SK-N-SH (cell line): ENCODE measurements at regions of chr1 and their contacts with region 1.

Region 1: DNA sequence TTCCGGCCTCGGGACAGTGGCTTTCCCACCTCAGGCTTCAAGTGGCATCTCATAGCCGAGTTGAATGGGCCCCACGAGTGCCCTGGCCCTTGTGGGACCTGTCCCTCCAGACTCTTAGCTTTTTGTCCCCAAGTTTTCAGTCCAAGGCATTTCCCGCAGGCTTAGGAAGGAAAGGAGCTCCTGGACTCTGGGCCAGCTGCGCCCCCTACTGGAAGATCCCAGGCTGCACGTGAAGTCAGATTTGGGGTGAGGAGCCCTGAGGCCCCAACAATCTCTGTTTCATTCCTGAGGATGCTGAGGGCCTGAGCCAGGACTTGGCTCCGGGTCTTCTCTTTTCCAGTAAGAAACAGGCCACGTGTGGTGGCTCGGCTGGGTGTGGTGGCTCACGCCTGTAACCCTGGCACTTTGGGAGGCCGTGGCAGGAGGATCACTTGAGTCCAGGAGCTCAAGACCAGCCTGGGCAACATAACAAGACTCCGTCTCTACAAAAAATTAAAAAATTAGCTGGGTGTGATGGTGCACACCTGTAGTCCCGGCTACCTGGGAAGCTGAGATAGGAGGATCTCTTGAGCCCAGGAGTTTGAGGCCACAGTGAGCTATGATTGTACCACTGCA is 67.4 kb downstream of the ARHGEF10L start:
- DNase-seq: peak; percentile 88
- H3K4me3 ChIP-seq: no peak overlapping the region; a peak in 1 of 4 replicates
- H3K27ac ChIP-seq: no peak overlapping the region
- H3K4me1 ChIP-seq: peaks cover 0 to 41% of the 10 kb centered on the region in 2 experiments; a peak in 1 of 4 replicates
- H3K27me3 ChIP-seq: no peaks in the 10 kb centered on the region
- CTCF ChIP-seq: peak; percentile 98
- EP300 ChIP-seq: no peak
- RAD21 ChIP-seq: peak; percentile 96

Region 2: GRCh38 chr1:17274186-17275170 is 332.5 kb before region 1 on chr1:
- CTCF ChIA-PET with region 1: no interaction called
- POLR2A ChIA-PET with region 1: no interaction called
- DNase-seq: peak; percentile 76
- H3K4me3 ChIP-seq: no peak overlapping the region
- H3K27ac ChIP-seq: no peak overlapping the region
- H3K4me1 ChIP-seq: peaks cover 0 to 4% of the 10 kb centered on the region in 2 experiments; a peak in 1 of 4 replicates
- H3K27me3 ChIP-seq: no peaks in the 10 kb centered on the region
- CTCF ChIP-seq: peak; percentile 72
- EP300 ChIP-seq: no peak
- RAD21 ChIP-seq: peak; percentile 57

Region 3: GRCh38 chr1:17427696-17428660 is 179.0 kb before region 1 on chr1:
- CTCF ChIA-PET with region 1: no interaction called
- POLR2A ChIA-PET with region 1: no interaction called
- DNase-seq: no peak
- H3K4me3 ChIP-seq: no peak overlapping the region
- H3K27ac ChIP-seq: no peak overlapping the region; a peak in 1 of 4 replicates
- H3K4me1 ChIP-seq: peaks cover 0 to 11% of the 10 kb centered on the region in 2 experiments; a peak in 1 of 4 replicates
- H3K27me3 ChIP-seq: no peaks in the 10 kb centered on the region
- CTCF ChIP-seq: no peak
- EP300 ChIP-seq: no peak
- RAD21 ChIP-seq: no peak

Region 4: DNA sequence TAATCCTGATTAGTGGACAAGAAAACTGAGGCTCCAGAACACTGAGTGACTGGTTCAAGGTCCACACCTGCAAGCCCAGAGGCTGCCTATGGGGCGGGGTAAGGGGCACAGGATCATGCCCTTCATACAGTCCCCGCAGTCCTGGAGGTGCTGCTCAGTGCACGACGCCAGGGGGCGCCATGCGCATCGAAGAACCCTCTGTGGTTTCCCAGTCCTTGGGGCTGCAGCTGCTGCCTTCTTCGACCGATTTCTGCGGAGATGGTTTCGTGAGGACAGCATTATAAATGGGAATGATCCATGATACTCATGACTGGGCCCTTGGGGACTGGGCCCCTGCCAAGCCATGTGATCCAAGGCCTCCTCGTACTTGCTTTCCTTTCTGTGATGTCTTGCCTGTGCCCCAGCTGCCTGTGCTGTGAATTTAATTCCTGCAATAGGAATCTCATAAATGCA is 104.6 kb before region 1 on chr1:
- CTCF ChIA-PET with region 1: interaction called, 707 read pairs
- POLR2A ChIA-PET with region 1: interaction called, 12 read pairs
- DNase-seq: peak; percentile 85
- H3K4me3 ChIP-seq: no peak overlapping the region
- H3K27ac ChIP-seq: no peak overlapping the region
- H3K4me1 ChIP-seq: peaks cover 0 to 2% of the 10 kb centered on the region in 2 experiments; a peak in 1 of 4 replicates
- H3K27me3 ChIP-seq: peaks cover 8% of the 10 kb centered on the region
- CTCF ChIP-seq: peak; percentile 89
- EP300 ChIP-seq: no peak
- RAD21 ChIP-seq: peak; percentile 92

Region 5: GRCh38 chr1:17551755-17552234 is 55.1 kb before region 1 on chr1:
- CTCF ChIA-PET with region 1: interaction called, 13 read pairs
- POLR2A ChIA-PET with region 1: no interaction called
- DNase-seq: peak; percentile 89
- H3K4me3 ChIP-seq: peak overlapping the region in 1 of 2 experiments; percentile 15; a peak in 2 of 4 replicates
- H3K27ac ChIP-seq: peak overlapping the region; percentile 77 to 93
- H3K4me1 ChIP-seq: peaks cover 23 to 27% of the 10 kb centered on the region in 2 experiments; a peak in 3 of 4 replicates
- H3K27me3 ChIP-seq: no peaks in the 10 kb centered on the region
- CTCF ChIP-seq: no peak
- EP300 ChIP-seq: peak in 1 of 2 experiments; percentile 87; a peak in 2 of 4 replicates
- RAD21 ChIP-seq: peak; percentile 25

Region 6: GRCh38 chr1:17574516-17574915 is 32.4 kb before region 1 on chr1:
- CTCF ChIA-PET with region 1: interaction called, 42 read pairs
- POLR2A ChIA-PET with region 1: no interaction called
- DNase-seq: peak; percentile 57
- H3K4me3 ChIP-seq: no peak overlapping the region
- H3K27ac ChIP-seq: no peak overlapping the region
- H3K4me1 ChIP-seq: peaks cover 6 to 29% of the 10 kb centered on the region in 2 experiments; a peak in 2 of 4 replicates
- H3K27me3 ChIP-seq: no peaks in the 10 kb centered on the region
- CTCF ChIP-seq: no peak; the same call in 1 of the 2 replicates
- EP300 ChIP-seq: no peak
- RAD21 ChIP-seq: peak; percentile 38

Region 7: DNA sequence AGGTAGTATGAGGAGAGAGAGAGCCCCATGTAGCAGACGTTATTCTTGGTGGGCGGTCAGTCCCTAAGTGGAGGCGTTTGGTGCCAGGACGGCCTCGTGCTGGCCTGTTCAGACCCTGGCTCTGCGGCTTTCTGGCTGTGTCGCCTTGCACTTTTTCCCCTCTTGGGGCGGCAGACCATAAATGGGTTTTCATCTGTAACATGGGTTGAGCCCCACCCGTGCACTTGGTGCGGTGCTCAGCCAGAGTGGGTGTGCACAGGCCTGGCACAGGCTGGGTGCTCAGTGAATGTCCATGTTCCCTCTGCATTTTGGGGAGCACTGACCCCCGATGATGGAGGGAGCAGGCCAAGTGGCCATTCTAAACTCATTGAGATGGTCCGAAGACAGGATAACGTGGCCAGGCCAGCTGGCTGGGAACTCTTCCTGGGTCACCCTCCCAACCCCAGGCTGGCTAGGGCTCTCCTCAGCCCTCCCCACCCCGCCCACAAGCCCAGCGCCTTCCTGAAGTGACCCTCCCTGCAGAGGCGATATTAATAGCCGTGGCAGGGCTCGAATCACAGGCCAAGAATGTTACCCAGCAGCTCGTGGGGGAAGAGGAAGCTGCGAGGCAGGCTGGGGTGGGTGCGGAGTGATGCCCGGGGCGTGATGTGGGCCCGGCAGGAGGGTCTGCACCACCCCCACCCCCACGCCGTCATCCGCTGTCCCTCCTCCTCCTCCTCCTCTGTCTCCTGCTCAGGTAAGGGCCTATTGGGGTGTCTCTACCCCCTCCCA is 11.0 kb after region 1 on chr1:
- CTCF ChIA-PET with region 1: interaction called, 15 read pairs
- POLR2A ChIA-PET with region 1: no interaction called
- DNase-seq: no peak
- H3K4me3 ChIP-seq: no peak overlapping the region
- H3K27ac ChIP-seq: no peak overlapping the region
- H3K4me1 ChIP-seq: peaks cover 0 to 14% of the 10 kb centered on the region in 2 experiments; a peak in 1 of 4 replicates
- H3K27me3 ChIP-seq: no peaks in the 10 kb centered on the region
- CTCF ChIP-seq: no peak
- EP300 ChIP-seq: no peak
- RAD21 ChIP-seq: no peak

Region 8: DNA sequence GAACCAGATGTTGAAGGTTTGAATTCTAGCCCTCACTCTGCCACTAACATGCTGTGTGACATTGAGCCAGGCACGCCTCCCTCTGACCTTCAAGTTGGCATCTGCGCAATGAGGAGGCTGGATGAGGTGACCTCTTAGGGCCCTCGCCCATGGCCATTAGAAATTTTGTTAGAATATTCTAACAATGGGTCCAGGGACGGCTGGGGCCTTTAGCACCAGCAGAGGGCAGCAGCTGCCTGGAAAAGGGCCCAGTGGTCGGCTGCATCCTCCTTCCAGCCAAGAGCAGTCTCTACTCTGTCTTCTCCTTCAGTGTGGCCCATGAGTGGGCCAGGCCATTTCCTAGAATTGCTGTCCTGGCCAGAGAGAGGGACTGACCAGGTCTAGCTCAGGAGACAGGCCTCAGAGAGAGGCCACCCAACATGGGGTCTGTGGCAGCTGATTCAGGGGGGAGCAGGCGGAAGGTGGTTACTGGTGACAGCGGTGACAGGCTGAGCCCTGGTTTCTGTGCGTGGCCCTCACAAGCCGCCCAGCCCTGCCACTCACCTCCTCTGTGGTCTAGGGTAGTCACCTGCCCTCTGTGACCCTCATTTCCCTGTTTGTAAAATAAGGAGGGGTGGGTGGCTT is 46.9 kb after region 1 on chr1:
- CTCF ChIA-PET with region 1: interaction called, 11 read pairs
- POLR2A ChIA-PET with region 1: no interaction called
- DNase-seq: peak; percentile 85
- H3K4me3 ChIP-seq: no peak overlapping the region; a peak in 1 of 4 replicates
- H3K27ac ChIP-seq: no peak overlapping the region
- H3K4me1 ChIP-seq: peaks cover 0 to 6% of the 10 kb centered on the region in 2 experiments; a peak in 1 of 4 replicates
- H3K27me3 ChIP-seq: no peaks in the 10 kb centered on the region
- CTCF ChIP-seq: peak; percentile 79
- EP300 ChIP-seq: no peak
- RAD21 ChIP-seq: peak; percentile 84

Region 9: DNA sequence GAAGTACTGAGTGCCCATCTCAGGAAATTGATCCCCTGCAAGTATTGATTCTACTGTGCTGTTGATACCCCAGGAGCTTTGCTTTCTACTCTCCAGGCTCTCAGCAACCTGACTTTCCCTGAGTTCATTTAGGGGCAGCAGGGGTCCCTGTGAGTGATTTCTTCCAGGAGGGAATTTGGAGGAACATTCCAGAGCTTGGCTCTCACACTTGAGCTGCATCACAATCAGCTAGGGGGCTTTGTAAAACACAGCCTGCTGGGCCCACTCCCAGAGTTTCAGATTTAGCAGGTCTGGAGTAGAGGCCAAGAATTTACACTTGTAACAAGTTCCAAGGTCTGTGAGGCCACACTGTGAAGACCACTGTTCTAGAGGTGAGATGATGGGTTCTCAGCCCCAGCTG is 132.1 kb after region 1 on chr1:
- CTCF ChIA-PET with region 1: no interaction called
- POLR2A ChIA-PET with region 1: no interaction called
- DNase-seq: no peak
- H3K4me3 ChIP-seq: no peak overlapping the region
- H3K27ac ChIP-seq: no peak overlapping the region
- H3K4me1 ChIP-seq: peaks cover 0 to 21% of the 10 kb centered on the region in 2 experiments; a peak in 1 of 4 replicates
- H3K27me3 ChIP-seq: no peaks in the 10 kb centered on the region
- CTCF ChIP-seq: no peak
- EP300 ChIP-seq: no peak
- RAD21 ChIP-seq: no peak

Region 10: GRCh38 chr1:17752356-17752755 is 145.4 kb after region 1 on chr1:
- CTCF ChIA-PET with region 1: no interaction called
- POLR2A ChIA-PET with region 1: no interaction called
- DNase-seq: no peak
- H3K4me3 ChIP-seq: no peak overlapping the region
- H3K27ac ChIP-seq: no peak overlapping the region
- H3K4me1 ChIP-seq: peaks cover 0 to 15% of the 10 kb centered on the region in 2 experiments; a peak in 1 of 4 replicates
- H3K27me3 ChIP-seq: no peaks in the 10 kb centered on the region
- CTCF ChIP-seq: no peak
- EP300 ChIP-seq: no peak
- RAD21 ChIP-seq: no peak